Uterus (tissue), 4 donors: ENCODE measurements at regions of chr7 and their contacts with region 1.

Region 1: DNA sequence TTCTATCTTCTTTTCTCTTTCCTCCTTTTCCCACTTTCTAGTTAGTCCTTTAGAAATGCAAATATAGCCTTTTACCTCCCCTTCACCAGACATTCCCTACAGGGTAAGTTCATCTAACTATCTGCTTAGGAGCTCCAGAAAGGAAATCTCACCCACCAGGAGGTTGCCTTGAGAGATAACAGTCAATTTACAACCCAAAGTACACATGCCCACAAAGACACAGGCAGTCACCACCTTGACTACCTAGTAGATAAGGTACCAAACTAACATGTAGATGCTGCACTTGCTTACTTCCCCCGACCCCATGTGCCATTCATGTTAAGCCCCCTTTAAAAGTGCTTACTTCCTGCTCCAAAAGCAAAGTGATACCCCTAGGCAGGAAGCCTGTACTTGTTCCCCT is 12.8 kb upstream of the CREB3L2 start:
- DNase-seq: no peak
- H3K4me3 ChIP-seq: no peak overlapping the region
- H3K27ac ChIP-seq: no peak overlapping the region
- H3K4me1 ChIP-seq: no peaks in the 10 kb centered on the region
- H3K27me3 ChIP-seq: no peaks in the 10 kb centered on the region
- CTCF ChIP-seq: no peak
- POLR2A ChIP-seq: no peak

Region 2: DNA sequence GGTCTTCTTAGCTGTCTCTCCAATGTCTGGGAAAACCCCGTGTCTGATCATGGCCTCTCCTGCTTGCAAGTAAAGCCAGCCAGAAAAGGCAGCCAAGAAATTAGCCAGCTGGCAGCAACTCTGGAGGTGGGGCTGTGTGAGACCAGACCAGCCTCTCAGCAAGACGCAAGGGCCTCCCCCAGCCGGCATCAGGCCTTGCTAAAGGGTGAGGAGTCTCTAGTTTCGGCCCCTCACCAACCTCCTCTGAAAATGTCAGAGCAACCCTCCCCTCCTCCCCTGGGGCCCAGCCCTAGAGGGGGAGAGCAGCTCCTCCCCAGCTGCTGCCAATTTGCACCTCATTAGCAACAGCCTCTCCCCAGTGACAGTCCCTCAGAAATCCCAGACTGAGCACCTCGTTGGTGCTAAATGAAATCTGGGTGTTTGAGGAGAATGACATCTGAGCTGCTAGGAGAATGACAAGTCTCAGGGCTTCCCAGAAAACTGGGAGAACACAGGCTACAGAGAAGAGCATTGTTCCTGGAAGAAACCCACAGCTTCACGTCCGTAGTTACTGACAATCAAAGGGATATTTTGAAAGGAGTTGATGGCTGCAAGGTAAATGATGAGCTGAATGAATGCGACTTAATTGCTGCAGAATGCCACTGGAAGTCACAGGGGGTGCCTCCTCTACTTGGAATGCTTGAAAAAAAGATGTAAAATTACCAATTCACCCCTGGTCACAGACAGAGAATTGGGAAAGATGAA is 193.8 kb before region 1 on chr7:
- intact Hi-C with region 1: loop called (anchors 5 kb)
- DNase-seq: peak; percentile 29 to 76
- H3K4me3 ChIP-seq: no peak overlapping the region
- H3K27ac ChIP-seq: no peak overlapping the region
- H3K4me1 ChIP-seq: no peaks in the 10 kb centered on the region
- H3K27me3 ChIP-seq: no peaks in the 10 kb centered on the region
- CTCF ChIP-seq: no peak
- POLR2A ChIP-seq: no peak